ENCODE measurements at regions of chr2 and their contacts with region 1.

Region 1: DNA sequence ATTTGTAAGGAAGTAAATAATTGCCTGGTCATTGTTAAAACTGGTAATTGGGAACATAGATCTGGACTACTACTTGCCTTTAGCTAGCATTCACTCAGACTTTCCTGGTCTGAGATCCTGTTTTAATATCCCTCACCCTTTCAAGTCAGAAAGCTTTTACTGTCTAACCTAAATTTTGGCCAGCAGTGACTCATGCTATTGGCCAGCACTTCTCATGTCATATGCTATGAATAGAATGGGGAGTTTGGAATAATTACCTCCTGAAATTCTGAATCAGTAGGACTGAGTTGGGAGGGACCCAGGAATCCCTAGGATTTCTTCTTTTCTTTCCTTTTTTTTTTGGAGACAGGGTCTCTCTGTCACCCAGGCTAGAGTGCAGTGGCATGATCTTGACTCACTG is 19.3 kb downstream of the STK36 start:
- DNase-seq: no peak
- H3K4me3 Mint-ChIP-seq: no peak overlapping the region
- H3K27ac Mint-ChIP-seq: no peak overlapping the region
- H3K4me1 Mint-ChIP-seq: no peaks in the 10 kb centered on the region
- H3K27me3 Mint-ChIP-seq: no peaks in the 10 kb centered on the region
- CTCF ChIP-seq: no peak

Region 2: GRCh38 chr2:218659258-218659987 is 31.8 kb before region 1 on chr2 and contains the starts of genes BCS1L and ZNF142:
- CTCF ChIA-PET with region 1: interaction called, 22 read pairs
- intact Hi-C with region 1: loop called (anchors 1 kb)
- DNase-seq: peak; percentile 96
- H3K4me3 Mint-ChIP-seq: peak within 1 kb of the TSS; percentile 99
- H3K27ac Mint-ChIP-seq: peak within 1 kb of the TSS; percentile 87
- H3K4me1 Mint-ChIP-seq: peaks cover 22% of the 10 kb centered on the region
- H3K27me3 Mint-ChIP-seq: no peaks in the 10 kb centered on the region
- CTCF ChIP-seq: no peak
- total RNA-seq, gene BCS1L: 57.9 and 61.7 TPM in 2 replicates
- total RNA-seq, gene ZNF142: 42.8 and 43.3 TPM in 2 replicates

Region 3: DNA sequence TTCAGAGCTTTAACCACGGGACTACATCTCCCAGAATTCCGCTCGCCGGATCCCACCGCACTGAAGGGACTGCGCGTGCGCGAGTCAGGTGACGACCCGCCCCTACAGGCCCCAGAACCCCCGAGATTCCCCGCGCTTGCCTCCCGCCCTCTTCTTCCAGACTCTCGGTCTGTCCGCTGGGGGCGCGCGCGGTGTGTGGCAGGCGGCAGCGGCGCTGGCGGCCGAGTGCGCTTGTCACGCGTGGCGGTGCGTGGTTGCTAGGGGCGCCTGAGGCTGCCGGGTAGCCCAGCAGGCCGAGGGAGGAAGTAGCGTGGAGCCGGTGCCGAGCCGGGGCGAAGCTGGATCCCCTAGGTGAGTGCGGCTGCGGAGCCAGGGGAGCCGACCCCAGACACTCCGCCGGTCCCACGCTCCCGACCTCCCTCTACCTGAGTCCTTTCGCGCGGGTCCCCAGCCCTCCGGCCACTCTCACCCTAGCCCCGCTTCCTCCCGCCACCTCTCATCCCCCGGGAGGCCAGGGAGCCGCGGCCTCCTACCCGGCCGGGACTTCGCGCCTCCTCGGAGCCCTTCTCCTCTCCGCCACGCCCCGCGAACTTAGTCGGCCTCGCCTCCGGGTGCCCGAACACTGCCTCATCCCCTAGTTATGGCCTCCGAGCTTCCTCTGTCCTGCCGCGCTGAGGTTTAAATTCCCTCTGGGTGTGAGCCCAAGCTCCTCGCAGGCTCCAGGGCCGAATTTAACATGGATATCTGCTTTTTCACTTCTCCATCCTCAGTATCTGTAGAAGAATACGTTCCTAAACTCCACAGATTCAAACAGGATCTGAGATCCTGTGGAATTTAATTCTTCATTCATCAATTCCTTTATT is 19.7 kb after region 1 on chr2 and contains the start of gene TTLL4:
- CTCF ChIA-PET with region 1: interaction called, 10 read pairs
- intact Hi-C with region 1: no loop called
- DNase-seq: peak; percentile 98
- H3K4me3 Mint-ChIP-seq: peak within 1 kb of the TSS; percentile 79
- H3K27ac Mint-ChIP-seq: peak within 1 kb of the TSS; percentile 90
- H3K4me1 Mint-ChIP-seq: peaks cover 20% of the 10 kb centered on the region
- H3K27me3 Mint-ChIP-seq: no peaks in the 10 kb centered on the region
- CTCF ChIP-seq: peak; percentile 86
- total RNA-seq, gene TTLL4: 67.3 and 75.5 TPM in 2 replicates

Region 4: GRCh38 chr2:218811382-218811781 is 120.1 kb after region 1 on chr2:
- CTCF ChIA-PET with region 1: no interaction called
- intact Hi-C with region 1: no loop called
- DNase-seq: no peak
- H3K4me3 Mint-ChIP-seq: no peak overlapping the region
- H3K27ac Mint-ChIP-seq: no peak overlapping the region
- H3K4me1 Mint-ChIP-seq: peaks cover 13% of the 10 kb centered on the region
- H3K27me3 Mint-ChIP-seq: no peaks in the 10 kb centered on the region
- CTCF ChIP-seq: no peak